ENCODE measurements at regions of chr2 and their contacts with region 1.

Region 1: GRCh38 chr2:29923110-29923721 is 1.8 kb upstream of the ALK start:
- ATAC-seq: peak in 1 of 8 experiments; percentile 3
- H3K4me3 ChIP-seq: no peak overlapping the region
- H3K27ac ChIP-seq: no peak overlapping the region
- H3K4me1 ChIP-seq: peaks cover 8 to 14% of the 10 kb centered on the region in 2 donors

Region 2: DNA sequence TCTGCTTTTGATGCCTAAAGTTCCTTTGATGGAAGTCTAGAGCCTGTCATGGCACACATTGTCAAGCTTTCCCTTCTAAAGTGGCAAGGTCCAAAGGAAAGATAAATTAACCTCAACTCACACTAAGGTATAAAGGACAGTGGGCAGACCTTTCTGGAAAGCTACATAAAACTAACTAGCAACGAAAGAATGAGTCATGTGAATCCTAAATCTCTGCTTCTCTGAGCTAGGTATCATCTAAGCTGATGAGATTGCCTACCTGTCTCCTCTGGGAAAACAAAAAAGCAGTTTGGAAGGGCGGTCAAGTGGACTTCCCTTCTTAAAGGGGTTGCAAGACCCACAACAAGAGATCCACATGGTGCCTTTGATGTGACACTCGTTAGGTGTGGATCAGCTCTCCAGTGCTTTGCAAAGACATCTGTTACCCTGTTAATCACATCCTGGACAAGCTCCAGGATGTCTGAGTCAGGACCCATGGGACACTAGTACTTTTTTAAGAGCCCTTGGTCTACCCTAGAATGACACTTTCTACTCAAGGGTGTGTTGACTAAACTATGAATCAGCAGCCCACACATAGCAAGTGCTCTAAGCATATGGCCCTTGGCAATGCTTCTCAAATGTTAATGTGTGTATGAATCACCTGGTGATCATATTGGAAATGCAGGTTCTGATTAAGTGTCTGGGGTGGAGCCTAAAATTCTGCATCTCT is 175.3 kb before region 1 on chr2:
- in situ Hi-C with region 1: no loop called
- ATAC-seq: peak; percentile 62 to 98 (median 80)
- H3K4me3 ChIP-seq: no peak overlapping the region
- H3K27ac ChIP-seq: no peak overlapping the region
- H3K4me1 ChIP-seq: no peaks in the 10 kb centered on the region

Region 3: DNA sequence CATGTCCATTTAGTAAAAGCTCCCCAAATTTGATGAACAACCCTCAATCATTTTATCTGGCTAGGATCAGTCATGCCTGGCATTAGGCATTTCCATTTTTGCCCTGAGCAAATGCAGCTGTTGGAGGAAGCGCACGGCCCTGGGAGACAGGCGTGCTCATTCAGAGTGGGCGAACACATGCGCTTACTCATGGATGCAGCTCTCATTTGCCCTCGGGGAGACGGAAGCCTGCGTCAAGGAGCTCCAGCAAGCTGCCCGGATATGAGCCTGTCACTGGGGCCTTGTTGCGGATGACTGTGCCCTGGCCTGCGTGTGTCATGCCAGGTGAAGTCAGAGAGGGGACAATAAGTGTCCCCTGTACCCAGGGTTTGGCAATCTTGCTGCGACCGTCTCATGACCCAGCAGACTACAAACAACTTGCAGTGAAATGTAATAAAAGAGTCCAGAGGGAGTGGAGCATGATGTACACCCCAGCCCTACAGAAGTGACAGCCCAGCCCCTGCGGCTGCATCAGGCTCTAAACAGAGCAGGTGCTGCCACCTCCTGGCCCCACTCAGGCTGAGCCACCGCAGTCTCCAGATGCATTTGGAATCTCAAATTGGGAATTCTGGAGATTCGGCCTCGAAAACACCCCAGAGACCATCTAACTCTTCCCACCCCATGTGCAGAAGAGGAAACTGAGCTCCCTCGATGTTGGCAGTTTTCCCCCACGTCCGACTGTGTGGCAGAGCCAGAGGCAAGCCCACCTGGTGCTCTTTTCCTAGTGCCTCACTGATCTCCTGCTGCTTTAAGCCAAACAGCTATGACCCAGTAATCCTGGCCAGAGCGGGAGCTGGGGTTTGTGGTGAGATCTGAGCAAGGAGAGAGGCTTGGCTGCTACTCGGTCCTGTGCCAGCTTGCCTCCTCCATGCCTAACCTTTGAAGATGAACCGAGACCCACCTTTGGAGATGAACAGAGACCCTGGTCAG is 103.2 kb after region 1 on chr2:
- in situ Hi-C with region 1: loop called in 1 of 9 experiments (anchors 10 kb)
- ATAC-seq: peak; percentile 95 to 98 (median 97)
- H3K4me3 ChIP-seq: no peak overlapping the region
- H3K27ac ChIP-seq: no peak overlapping the region
- H3K4me1 ChIP-seq: peaks cover 4 to 10% of the 10 kb centered on the region in 2 donors

Region 4: DNA sequence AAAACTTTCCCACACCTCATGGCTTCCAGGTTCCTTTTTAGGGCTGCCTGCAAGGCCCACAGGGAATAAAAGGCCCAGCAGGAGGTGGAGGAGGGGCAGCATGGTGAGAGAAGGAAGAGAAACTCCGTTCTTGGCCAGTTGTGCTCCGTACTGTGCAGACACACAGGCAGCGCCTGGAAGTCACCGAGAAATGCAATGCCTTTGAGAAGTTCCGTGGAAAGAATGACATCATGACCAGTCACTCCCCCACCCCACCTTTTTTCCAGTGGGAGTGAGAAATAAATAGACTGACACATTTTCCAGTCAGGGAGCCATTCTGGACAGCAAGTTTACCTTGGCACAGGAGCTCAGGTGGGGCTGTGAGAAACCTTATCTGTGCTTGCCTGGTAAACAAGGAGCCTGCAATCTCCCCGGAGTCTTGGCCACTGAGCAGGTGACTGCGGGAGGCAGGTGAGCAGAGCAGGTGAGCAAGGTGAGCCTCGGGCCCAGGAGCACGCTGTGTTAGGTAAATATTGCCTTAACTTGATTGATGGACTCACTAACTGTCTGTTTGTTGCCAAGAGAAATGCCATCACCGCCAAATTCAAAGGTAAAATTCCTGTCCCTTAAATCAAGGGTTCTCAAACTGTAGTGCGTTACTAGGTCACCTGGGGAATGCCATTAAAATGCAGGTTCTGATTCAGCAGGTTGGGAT is 294.6 kb after region 1 on chr2:
- in situ Hi-C with region 1: no loop called
- ATAC-seq: peak in 1 of 8 experiments; percentile 37
- H3K4me3 ChIP-seq: no peak overlapping the region
- H3K27ac ChIP-seq: no peak overlapping the region
- H3K4me1 ChIP-seq: no peaks in the 10 kb centered on the region

Region 5: GRCh38 chr2:30266051-30266621 is 342.9 kb after region 1 on chr2:
- in situ Hi-C with region 1: no loop called
- ATAC-seq: peak in 2 of 8 experiments; percentile 50
- H3K4me3 ChIP-seq: no peak overlapping the region
- H3K27ac ChIP-seq: no peak overlapping the region
- H3K4me1 ChIP-seq: no peaks in the 10 kb centered on the region

Region 6: GRCh38 chr2:30373881-30374302 is 450.7 kb after region 1 on chr2:
- in situ Hi-C with region 1: no loop called
- ATAC-seq: peak in 3 of 8 experiments; percentile 24 to 47 (median 36)
- H3K4me3 ChIP-seq: no peak overlapping the region
- H3K27ac ChIP-seq: no peak overlapping the region
- H3K4me1 ChIP-seq: no peaks in the 10 kb centered on the region